ENCODE measurements at regions of chr15 and their contacts with region 1.

Region 1: DNA sequence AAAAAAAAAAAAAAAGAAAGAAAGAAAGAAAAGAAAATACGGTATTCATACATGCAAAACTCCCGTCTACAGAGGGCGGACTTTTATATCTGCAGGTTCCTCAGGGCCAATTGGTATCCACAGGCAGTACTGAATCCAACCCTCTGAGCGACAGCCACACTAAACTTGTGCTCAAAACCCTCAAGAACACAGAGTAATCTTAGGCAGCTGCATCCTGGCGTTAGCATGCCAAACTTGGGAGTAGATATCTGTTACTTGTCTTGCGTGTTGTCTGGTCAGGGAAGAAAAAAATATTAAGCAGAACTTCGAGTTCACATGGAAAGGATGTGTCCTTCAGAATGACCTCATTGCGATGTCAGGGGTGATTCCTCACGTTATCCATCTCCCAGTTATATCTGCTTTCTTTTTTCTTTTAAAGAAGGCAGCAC is 12.8 kb downstream of the SNAP23 start:
- DNase-seq: peak in 2 of 4 experiments; percentile 22 to 45
- ATAC-seq: peak; percentile 86
- H3K4me3 ChIP-seq: no peak overlapping the region
- H3K27ac ChIP-seq: peak overlapping the region; percentile 50; the same call in 1 of the 3 replicates
- H3K4me1 ChIP-seq: peaks cover 5 to 28% of the 10 kb centered on the region in 2 experiments
- H3K27me3 ChIP-seq: no peaks in the 10 kb centered on the region
- CTCF ChIP-seq: peak in 2 of 3 experiments; percentile 13 to 34; a peak in 3 of 6 replicates
- EP300 ChIP-seq: no peak
- POLR2A ChIP-seq: no peak
- RAD21 ChIP-seq: no peak

Region 2: GRCh38 chr15:42495361-42496212 is 12.7 kb before region 1 on chr15 and contains the start of gene SNAP23:
- CTCF ChIA-PET with region 1: no interaction called
- POLR2A ChIA-PET with region 1: interaction called, 13 read pairs
- in situ Hi-C with region 1: no loop called
- intact Hi-C with region 1: no loop called
- DNase-seq: peak; percentile 94 to 97 (median 96)
- ATAC-seq: peak; percentile 94
- H3K4me3 ChIP-seq: peak within 1 kb of the TSS; percentile 74
- H3K27ac ChIP-seq: peak within 1 kb of the TSS; percentile 84
- H3K4me1 ChIP-seq: peaks cover 20 to 30% of the 10 kb centered on the region in 2 experiments
- H3K27me3 ChIP-seq: no peaks in the 10 kb centered on the region
- CTCF ChIP-seq: no peak
- EP300 ChIP-seq: peak; percentile 46; the same call in 1 of the 2 replicates
- POLR2A ChIP-seq: peak; percentile 89
- RAD21 ChIP-seq: 0 out of 4 replicates have a peak, but pooled peaks of 1 of the 2 experiments have one; percentile 13
- polyA plus RNA-seq, gene SNAP23: 84.1 to 117 TPM

Region 3: GRCh38 chr15:42581272-42581730 is 73.0 kb after region 1 on chr15:
- CTCF ChIA-PET with region 1: no interaction called
- POLR2A ChIA-PET with region 1: no interaction called
- in situ Hi-C with region 1: no loop called
- intact Hi-C with region 1: loop called (anchors 10 kb)
- DNase-seq: peak; percentile 29 to 83 (median 48)
- ATAC-seq: peak; percentile 91
- H3K4me3 ChIP-seq: peak overlapping the region; percentile 31
- H3K27ac ChIP-seq: no peak overlapping the region
- H3K4me1 ChIP-seq: peaks cover 26 to 29% of the 10 kb centered on the region in 2 experiments
- H3K27me3 ChIP-seq: no peaks in the 10 kb centered on the region
- CTCF ChIP-seq: no peak
- EP300 ChIP-seq: no peak
- POLR2A ChIP-seq: no peak
- RAD21 ChIP-seq: 0 out of 4 replicates have a peak, but pooled peaks of 1 of the 2 experiments have one; percentile 6

Region 4: DNA sequence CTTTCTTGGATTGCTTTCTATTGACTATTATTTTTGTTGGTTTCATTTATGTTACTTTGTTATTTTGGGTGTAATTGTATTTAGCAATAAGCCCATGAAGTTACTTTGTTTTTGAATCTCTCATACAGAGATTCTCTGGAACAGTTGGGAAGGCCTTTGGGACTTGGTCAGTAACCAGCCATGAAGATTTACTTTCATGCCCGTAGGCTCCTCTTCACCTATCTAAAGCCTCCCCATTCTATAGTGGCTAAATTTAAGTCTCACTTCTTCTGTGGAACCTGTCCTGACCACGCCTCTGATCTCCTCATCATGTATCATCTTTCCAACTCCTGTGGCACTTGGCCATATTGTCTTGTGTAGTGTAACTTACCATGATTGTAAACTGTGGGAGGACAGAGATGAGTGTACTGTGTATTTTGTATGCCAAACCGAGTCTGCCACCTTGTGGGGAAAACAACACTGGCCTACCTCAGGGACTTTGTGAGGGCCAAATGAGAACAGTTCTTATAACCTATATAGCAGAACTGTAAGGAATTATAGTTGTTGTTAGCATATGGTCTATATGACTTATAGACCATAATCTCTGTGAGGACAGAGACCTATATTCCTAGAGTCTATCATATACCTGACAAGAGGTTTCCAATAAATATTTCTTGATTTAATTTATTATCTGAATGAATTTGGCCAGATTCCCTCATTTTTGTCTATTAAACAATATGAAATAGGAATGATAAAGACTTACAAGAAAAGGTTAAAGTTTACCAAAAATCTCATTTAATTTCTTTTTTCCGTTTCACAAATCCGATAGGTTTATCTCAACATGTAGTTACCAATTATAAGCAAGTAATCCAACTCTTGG is 142.2 kb after region 1 on chr15:
- CTCF ChIA-PET with region 1: no interaction called
- POLR2A ChIA-PET with region 1: no interaction called
- in situ Hi-C with region 1: no loop called
- intact Hi-C with region 1: no loop called
- DNase-seq: peak; percentile 57 to 85 (median 68)
- ATAC-seq: peak; percentile 100
- H3K4me3 ChIP-seq: no peak overlapping the region
- H3K27ac ChIP-seq: no peak overlapping the region
- H3K4me1 ChIP-seq: peaks cover 0 to 3% of the 10 kb centered on the region in 2 experiments; a peak in 2 of 5 replicates
- H3K27me3 ChIP-seq: no peaks in the 10 kb centered on the region
- CTCF ChIP-seq: peak; percentile 74 to 89 (median 83)
- EP300 ChIP-seq: no peak
- POLR2A ChIP-seq: no peak
- RAD21 ChIP-seq: peak; percentile 87 to 95

Measured in K562 (cell line).